Panc1 (cell line): ENCODE measurements at regions of chr17 and their contacts with region 1.

Region 1: DNA sequence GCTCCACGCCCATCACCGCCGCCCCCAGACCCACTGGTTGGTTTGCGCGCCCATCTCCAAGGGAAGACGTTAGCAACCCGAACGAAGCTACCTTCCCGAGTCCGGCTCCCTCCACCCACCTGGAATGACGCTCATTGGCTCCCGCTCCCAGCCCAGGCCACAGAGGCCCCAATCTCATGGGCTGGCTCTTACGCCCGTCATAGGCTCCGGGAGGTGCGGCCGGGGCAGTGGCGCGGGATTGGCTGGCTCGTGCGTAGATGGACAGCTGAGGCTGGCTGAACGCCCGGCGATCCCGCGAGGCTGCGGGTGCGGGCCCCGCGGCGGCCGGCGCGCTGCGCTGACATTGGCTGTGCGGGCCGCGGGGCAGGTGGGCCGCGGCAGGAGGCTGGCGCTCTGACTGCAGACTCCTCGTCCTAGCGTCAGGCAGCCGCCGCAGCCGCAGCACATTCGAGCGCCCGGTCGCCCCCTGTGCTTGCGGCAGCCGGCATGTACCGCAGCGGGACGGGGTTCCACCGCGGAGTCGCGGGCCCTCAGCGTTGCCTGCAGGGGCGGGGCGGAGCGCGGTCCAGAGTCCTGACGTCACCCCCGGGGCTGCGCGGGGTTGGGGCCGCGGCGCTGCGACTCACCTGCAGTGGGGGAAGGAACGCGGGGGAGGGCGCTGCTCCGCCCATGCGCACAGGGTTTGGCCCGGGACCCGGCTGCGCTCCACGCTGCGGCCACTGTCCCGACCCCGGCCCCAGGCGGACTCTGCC is 453 bp upstream of the MYH10 start:
- DNase-seq: peak; percentile 74
- ATAC-seq: peak; percentile 99
- H3K4me3 ChIP-seq: peak overlapping the region; percentile 66 to 82
- H3K27ac ChIP-seq: peak overlapping the region; percentile 66
- H3K4me1 ChIP-seq: no peaks in the 10 kb centered on the region; the same call in 1 of the 2 replicates
- H3K27me3 ChIP-seq: no peaks in the 10 kb centered on the region
- CTCF ChIP-seq: peak; percentile 39

Region 2: GRCh38 chr17:8692913-8693727 is 62.1 kb after region 1 on chr17:
- CTCF ChIA-PET with region 1: no interaction called
- POLR2A ChIA-PET with region 1: interaction called, 10 read pairs
- in situ Hi-C with region 1: no loop called
- intact Hi-C with region 1: no loop called
- DNase-seq: no peak
- ATAC-seq: no peak
- H3K4me3 ChIP-seq: no peak overlapping the region
- H3K27ac ChIP-seq: no peak overlapping the region
- H3K4me1 ChIP-seq: no peaks in the 10 kb centered on the region
- H3K27me3 ChIP-seq: 0 out of 2 replicates have a peak, but pooled peaks cover 2% of the 10 kb centered on the region
- CTCF ChIP-seq: no peak